Activated naive CD4-positive, alpha-beta T cell treated with anti-CD3 and anti-CD28 coated beads for 36 hours (primary cell): ENCODE measurements at regions of chr12 and their contacts with region 1.

Region 1: GRCh38 chr12:64696080-64696741 is 63.0 kb downstream of the GNS start:
- DNase-seq: no peak
- H3K4me3 Mint-ChIP-seq: no peak overlapping the region
- H3K27ac Mint-ChIP-seq: peak overlapping the region; percentile 40
- H3K4me1 Mint-ChIP-seq: peaks cover 75% of the 10 kb centered on the region
- H3K27me3 Mint-ChIP-seq: no peaks in the 10 kb centered on the region

Region 2: DNA sequence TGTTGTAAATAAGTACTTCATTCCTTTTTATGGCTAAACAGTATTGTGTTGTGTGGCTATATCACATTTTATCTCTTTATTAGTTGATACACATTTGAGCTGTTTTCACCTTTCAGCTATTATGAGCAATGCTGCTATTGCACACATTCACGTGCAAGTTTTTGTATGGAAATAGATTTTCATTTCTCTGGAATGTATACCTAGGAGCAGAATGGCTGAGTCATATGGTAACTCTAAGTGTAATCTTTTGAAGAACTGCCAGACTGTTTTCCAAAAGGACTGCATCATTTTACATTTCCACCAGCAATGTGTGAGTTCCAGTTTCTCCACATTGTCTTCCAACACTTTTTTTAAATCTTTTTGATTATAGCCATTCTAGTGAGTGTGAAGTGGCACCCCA is 717.7 kb before region 1 on chr12:
- CTCF ChIA-PET with region 1: no interaction called
- intact Hi-C with region 1: no loop called
- DNase-seq: no peak
- H3K4me3 Mint-ChIP-seq: no peak overlapping the region
- H3K27ac Mint-ChIP-seq: no peak overlapping the region
- H3K4me1 Mint-ChIP-seq: no peaks in the 10 kb centered on the region
- H3K27me3 Mint-ChIP-seq: peaks cover 2% of the 10 kb centered on the region

Region 3: GRCh38 chr12:64256166-64256800 is 439.9 kb before region 1 on chr12:
- CTCF ChIA-PET with region 1: no interaction called
- intact Hi-C with region 1: no loop called
- DNase-seq: no peak
- H3K4me3 Mint-ChIP-seq: no peak overlapping the region
- H3K27ac Mint-ChIP-seq: no peak overlapping the region
- H3K4me1 Mint-ChIP-seq: no peaks in the 10 kb centered on the region
- H3K27me3 Mint-ChIP-seq: no peaks in the 10 kb centered on the region

Region 4: GRCh38 chr12:64451687-64452558 is 244.3 kb before region 1 on chr12 and contains the start of gene TBK1:
- CTCF ChIA-PET with region 1: no interaction called
- intact Hi-C with region 1: loop called (anchors 2 kb)
- DNase-seq: peak; percentile 45
- H3K4me3 Mint-ChIP-seq: peak within 1 kb of the TSS; percentile 94
- H3K27ac Mint-ChIP-seq: peak within 1 kb of the TSS; percentile 94
- H3K4me1 Mint-ChIP-seq: peaks cover 41% of the 10 kb centered on the region
- H3K27me3 Mint-ChIP-seq: no peaks in the 10 kb centered on the region
- total RNA-seq, gene TBK1: 10.7 to 12.1 TPM

Region 5: DNA sequence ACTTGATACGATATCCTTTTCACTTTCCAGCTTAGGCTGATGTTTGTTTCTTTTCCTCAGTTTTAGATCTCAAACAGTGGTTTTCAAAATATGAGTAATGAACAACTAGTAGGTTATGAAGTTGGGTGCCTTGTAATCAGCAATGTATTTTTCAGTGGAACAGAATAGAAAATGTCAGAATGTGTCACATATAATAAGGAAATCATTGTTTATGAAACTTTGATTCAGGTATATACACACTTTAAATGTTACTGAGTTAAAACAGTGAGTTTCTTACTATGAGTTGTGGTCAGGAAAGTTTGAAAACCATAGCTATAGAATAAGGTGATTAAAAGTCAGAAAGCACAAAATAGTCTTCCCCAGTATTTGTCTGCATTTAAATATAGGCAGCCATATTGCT is 204.5 kb before region 1 on chr12:
- CTCF ChIA-PET with region 1: no interaction called
- intact Hi-C with region 1: no loop called
- DNase-seq: no peak
- H3K4me3 Mint-ChIP-seq: no peak overlapping the region
- H3K27ac Mint-ChIP-seq: no peak overlapping the region
- H3K4me1 Mint-ChIP-seq: peaks cover 16% of the 10 kb centered on the region
- H3K27me3 Mint-ChIP-seq: no peaks in the 10 kb centered on the region

Region 6: DNA sequence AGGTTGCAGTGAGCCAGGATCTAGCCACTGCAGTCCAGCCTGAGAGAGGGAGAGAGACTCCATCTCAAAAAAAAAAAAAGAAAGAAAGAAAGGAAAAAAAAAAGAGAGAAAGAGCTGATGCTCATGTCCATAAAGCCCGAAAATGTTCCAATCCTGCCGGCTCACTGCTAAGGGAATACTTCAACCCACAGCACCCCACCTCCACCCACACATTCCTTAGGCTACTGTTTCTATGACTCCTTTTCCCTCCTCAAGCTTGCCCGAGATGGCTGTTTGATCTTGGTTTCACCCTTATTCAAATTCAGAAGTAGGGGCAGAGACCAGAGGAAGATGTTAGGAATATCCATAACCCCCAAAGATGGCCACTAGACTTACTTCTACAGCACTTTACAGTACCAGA is 145.5 kb before region 1 on chr12:
- CTCF ChIA-PET with region 1: interaction called, 105 read pairs
- intact Hi-C with region 1: loop called (anchors 1 kb)
- DNase-seq: no peak
- H3K4me3 Mint-ChIP-seq: no peak overlapping the region
- H3K27ac Mint-ChIP-seq: no peak overlapping the region
- H3K4me1 Mint-ChIP-seq: peaks cover 7% of the 10 kb centered on the region
- H3K27me3 Mint-ChIP-seq: no peaks in the 10 kb centered on the region

Region 7: GRCh38 chr12:64571411-64571810 is 124.8 kb before region 1 on chr12:
- CTCF ChIA-PET with region 1: interaction called, 16 read pairs
- intact Hi-C with region 1: no loop called
- DNase-seq: peak; percentile 9
- H3K4me3 Mint-ChIP-seq: no peak overlapping the region
- H3K27ac Mint-ChIP-seq: no peak overlapping the region
- H3K4me1 Mint-ChIP-seq: peaks cover 31% of the 10 kb centered on the region
- H3K27me3 Mint-ChIP-seq: no peaks in the 10 kb centered on the region

Region 8: DNA sequence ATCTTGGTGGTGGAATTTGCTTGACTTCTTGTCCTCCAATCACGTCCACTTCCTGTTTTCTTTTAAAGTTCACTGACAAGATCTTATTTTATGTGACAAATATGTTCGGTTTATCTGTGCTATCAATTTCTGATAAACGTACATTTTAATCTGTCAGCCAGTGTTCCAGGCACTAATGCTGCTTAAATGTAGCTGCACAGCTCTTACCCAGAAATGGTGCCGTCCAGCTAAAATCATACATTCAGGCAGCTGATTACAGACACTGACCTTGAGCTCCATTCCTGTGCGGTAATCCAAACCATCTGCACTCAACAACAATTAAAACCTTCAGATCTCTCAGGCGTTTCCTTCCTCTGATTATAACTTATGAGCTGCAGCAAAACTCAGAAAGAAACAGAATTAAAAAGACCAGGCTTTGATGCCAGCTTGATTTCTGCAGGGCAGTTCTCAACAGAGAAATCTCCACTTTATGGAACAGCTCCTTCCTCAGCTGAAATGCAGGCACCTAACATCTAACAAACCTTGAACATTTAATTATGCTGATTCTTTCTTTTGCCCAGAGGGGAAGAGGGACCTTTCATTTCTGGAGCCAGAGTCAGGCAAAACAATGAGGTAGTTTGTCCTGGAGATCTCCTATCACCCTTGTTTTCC is 112.3 kb before region 1 on chr12:
- CTCF ChIA-PET with region 1: interaction called, 4 read pairs
- intact Hi-C with region 1: loop called (anchors 1 kb)
- DNase-seq: no peak
- H3K4me3 Mint-ChIP-seq: peak overlapping the region; percentile 55
- H3K27ac Mint-ChIP-seq: peak overlapping the region; percentile 72
- H3K4me1 Mint-ChIP-seq: peaks cover 28% of the 10 kb centered on the region
- H3K27me3 Mint-ChIP-seq: no peaks in the 10 kb centered on the region

Region 9: GRCh38 chr12:64669270-64669842 is 26.9 kb before region 1 on chr12:
- CTCF ChIA-PET with region 1: interaction called, 14 read pairs
- intact Hi-C with region 1: no loop called
- DNase-seq: peak; percentile 63
- H3K4me3 Mint-ChIP-seq: peak overlapping the region; percentile 78
- H3K27ac Mint-ChIP-seq: peak overlapping the region; percentile 92
- H3K4me1 Mint-ChIP-seq: peaks cover 93% of the 10 kb centered on the region
- H3K27me3 Mint-ChIP-seq: no peaks in the 10 kb centered on the region

Region 10: GRCh38 chr12:64679487-64679983 is 16.7 kb before region 1 on chr12:
- CTCF ChIA-PET with region 1: interaction called, 13 read pairs
- intact Hi-C with region 1: no loop called
- DNase-seq: peak; percentile 72
- H3K4me3 Mint-ChIP-seq: peak overlapping the region; percentile 53
- H3K27ac Mint-ChIP-seq: peak overlapping the region; percentile 89
- H3K4me1 Mint-ChIP-seq: peaks cover 95% of the 10 kb centered on the region
- H3K27me3 Mint-ChIP-seq: no peaks in the 10 kb centered on the region